ENCODE measurements at regions of chrX and their contacts with region 1.

Region 1: DNA sequence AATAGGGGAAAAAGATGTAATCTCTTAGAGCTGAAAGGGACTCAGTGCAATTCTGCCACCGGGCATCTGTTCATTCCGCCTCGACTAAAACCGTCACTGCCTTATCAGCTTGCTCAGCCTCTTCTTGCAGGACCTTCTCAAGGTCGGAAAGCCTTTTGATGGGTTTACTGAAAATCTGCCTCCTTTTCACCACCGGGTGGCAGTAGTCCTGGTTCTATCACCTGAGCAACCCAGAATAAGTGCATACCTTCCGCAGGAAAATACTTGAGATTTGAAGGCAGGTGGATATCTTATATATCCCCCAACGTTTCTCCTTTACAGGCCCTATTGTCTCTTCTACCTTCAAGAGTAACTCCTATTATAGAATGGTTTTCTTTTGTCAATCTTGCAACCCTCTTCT is 103.4 kb upstream of the PAK3 start:
- DNase-seq: peak; percentile 34
- ATAC-seq: no peak
- H3K4me3 Mint-ChIP-seq: no peak overlapping the region
- H3K27ac Mint-ChIP-seq: no peak overlapping the region
- H3K4me1 Mint-ChIP-seq: no peaks in the 10 kb centered on the region
- H3K27me3 Mint-ChIP-seq: peaks cover 2% of the 10 kb centered on the region
- CTCF ChIP-seq: peak; percentile 21

Region 2: GRCh38 chrX:111098874-111099273 is 106.3 kb after region 1 on chrX:
- CTCF ChIA-PET with region 1: interaction called, 6 read pairs
- POLR2A ChIA-PET with region 1: no interaction called
- intact Hi-C with region 1: loop called (anchors 5 kb)
- DNase-seq: peak; percentile 66
- ATAC-seq: peak; percentile 82
- H3K4me3 Mint-ChIP-seq: no peak overlapping the region
- H3K27ac Mint-ChIP-seq: no peak overlapping the region
- H3K4me1 Mint-ChIP-seq: peaks cover 12% of the 10 kb centered on the region
- H3K27me3 Mint-ChIP-seq: peaks cover 14% of the 10 kb centered on the region
- CTCF ChIP-seq: peak; percentile 61